Mucosa of descending colon (tissue), 3 donors: ENCODE measurements at regions of chr16 and their contacts with region 1.

Region 1: DNA sequence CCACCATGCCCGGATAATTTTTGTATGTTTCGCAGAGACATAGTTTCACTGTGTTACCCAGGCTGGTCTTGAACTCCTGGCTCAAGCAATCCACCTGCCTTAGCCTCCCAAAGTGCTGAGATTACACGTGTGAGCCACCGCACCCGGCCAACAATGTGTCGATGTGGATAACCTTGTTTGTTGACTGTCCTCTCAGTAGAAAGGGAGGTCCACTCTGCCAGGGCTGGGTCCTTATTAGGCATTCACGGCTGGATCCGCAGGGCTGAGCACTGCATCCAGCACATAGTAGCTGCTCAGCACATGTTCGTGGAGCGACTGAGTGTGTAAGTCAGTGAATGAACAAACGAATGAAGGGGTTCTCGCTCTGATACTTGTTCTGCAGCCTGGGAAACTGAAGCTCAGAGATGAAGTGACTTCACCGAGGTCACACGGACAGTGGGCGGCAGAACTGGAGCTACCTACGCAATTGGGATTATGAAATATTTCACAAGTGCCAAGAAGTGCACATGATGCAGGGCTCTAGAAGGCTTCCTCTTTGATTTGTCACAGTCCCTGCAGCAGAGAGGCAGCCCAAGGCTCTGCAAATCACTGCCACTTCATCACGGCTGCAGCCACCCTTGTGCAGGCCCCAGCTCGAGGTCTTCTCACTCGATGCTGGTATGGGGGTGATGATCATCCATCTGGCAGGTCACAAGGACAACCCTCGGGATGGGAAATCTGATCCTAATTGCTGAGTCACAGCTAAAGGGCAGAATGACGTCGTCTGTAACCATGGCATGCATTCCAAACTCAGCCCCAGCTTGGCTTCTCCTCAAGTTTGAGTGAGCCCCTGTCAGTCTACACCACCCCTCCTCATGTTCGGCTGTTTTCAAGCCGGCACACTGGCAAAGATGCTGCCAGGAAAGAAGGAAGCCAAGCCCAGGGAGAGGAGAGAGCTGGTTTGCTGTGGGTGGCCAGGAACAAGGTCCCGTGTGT is 28.0 kb upstream of the SNN start:
- DNase-seq: peak in 2 of 3 donors; percentile 63 to 75
- ATAC-seq: peak; percentile 30
- H3K4me3 ChIP-seq: no peak overlapping the region
- H3K4me1 ChIP-seq: peaks cover 21% of the 10 kb centered on the region
- CTCF ChIP-seq: no peak

Region 2: GRCh38 chr16:11407047-11407982 is 232.9 kb before region 1 on chr16:
- intact Hi-C with region 1: loop called in 1 of 2 experiments (anchors 1 kb)
- DNase-seq: peak in 2 of 3 donors; percentile 55 to 89
- ATAC-seq: peak; percentile 87
- H3K4me3 ChIP-seq: no peak overlapping the region
- H3K4me1 ChIP-seq: no peaks in the 10 kb centered on the region
- CTCF ChIP-seq: peak; percentile 42

Region 3: DNA sequence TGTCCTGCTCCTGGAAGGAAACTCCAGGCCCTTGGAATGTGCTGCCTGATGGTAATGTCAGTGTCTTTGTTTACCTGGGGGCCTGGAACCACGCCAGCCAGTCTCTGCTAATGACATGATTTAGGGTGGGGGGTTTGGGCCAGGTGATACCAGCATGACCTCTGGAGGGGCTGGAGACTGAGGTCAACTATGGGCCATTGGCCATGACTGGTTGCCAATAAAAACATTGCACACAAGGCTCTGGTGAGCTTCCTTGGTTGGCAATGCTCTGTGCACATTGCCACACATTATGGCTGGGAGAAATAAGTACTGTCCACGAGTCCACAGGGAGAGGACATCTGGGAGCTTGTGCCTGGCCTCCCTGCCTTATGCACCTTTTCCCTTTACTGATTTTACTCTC is 106.0 kb before region 1 on chr16:
- intact Hi-C with region 1: loop called in 1 of 2 experiments (anchors 5 kb)
- DNase-seq: no peak
- ATAC-seq: peak; percentile 36
- H3K4me3 ChIP-seq: no peak overlapping the region
- H3K4me1 ChIP-seq: no peaks in the 10 kb centered on the region
- CTCF ChIP-seq: no peak